ENCODE measurements at regions of chr22 and their contacts with region 1.

Region 1: DNA sequence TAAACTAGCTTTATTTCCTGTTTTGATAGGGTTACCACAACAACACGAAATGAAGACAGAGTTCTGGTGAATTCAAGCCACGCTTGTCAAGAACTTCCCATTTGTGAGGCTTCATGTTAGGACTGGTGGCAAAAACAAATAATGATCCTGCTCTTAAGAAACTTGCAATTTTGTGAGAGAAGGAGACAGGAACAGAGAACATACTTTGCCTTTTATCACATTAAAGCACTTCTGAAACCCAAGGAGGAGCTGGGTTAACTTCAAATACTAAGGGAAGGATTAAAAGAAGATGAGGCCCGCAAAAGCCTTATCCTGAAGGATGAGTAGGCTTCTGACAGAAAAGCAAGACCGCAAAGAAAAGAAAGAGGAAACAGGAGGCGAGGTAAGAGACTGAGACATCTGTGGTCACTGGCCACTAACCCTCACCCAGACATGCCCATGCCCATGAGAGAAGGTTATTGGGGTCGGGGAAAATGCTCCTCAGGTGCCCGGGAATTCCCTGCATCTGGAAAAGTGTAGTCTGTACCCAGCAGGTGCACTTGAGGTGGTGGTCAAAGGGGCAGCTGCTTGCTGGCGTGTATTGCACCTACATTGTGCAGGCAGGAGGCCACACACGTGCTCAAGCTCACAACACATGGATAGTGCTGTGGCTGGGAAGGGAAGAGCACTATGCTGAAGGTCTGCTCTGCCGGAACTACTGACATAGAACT is 50.5 kb downstream of the MAPK1 start:
- DNase-seq: peak; percentile 42
- H3K4me3 Mint-ChIP-seq: peak overlapping the region; percentile 65
- H3K27ac Mint-ChIP-seq: peak overlapping the region; percentile 96
- H3K4me1 Mint-ChIP-seq: peaks cover 47% of the 10 kb centered on the region
- H3K27me3 Mint-ChIP-seq: no peaks in the 10 kb centered on the region

Region 2: DNA sequence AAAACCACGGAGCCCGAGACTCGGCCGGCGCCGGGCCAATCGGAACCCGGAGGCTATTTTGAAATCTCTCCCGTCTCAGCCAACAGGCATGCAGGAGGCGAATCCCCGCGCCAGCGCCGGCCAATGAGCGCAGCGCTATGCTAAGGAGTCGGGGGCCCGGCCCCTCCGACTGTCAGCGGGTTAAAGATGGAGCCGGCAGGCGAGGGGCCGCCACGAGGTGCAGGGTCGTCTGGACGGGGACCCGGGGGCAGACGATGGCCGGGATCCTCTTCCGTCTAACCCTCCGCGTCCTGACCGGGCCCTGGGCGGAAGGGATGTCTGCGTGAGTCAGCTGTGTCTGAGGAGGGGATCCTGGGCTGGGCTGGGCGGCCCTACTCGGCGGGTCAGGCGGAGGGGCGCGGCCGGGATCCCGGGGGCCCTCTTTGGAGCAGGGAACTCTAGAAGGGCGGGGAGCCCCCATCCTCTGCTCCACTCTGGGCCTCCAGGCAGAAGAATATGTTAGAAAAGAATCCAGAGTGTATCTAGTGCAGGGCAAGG is 164.9 kb before region 1 on chr22:
- intact Hi-C with region 1: no loop called
- DNase-seq: peak; percentile 88
- H3K4me3 Mint-ChIP-seq: peak overlapping the region; percentile 88
- H3K27ac Mint-ChIP-seq: peak overlapping the region; percentile 80
- H3K4me1 Mint-ChIP-seq: peaks cover 34% of the 10 kb centered on the region
- H3K27me3 Mint-ChIP-seq: no peaks in the 10 kb centered on the region

Region 3: GRCh38 chr22:21791635-21792625 is 25.0 kb before region 1 on chr22:
- intact Hi-C with region 1: loop called (anchors 1 kb)
- DNase-seq: peak; percentile 12
- H3K4me3 Mint-ChIP-seq: no peak overlapping the region
- H3K27ac Mint-ChIP-seq: peak overlapping the region; percentile 72
- H3K4me1 Mint-ChIP-seq: peaks cover 12% of the 10 kb centered on the region
- H3K27me3 Mint-ChIP-seq: no peaks in the 10 kb centered on the region

Region 4: GRCh38 chr22:21876486-21877176 is 59.7 kb after region 1 on chr22:
- intact Hi-C with region 1: loop called (anchors 1 kb)
- DNase-seq: no peak
- H3K4me3 Mint-ChIP-seq: no peak overlapping the region
- H3K27ac Mint-ChIP-seq: peak overlapping the region; percentile 94
- H3K4me1 Mint-ChIP-seq: peaks cover 15% of the 10 kb centered on the region
- H3K27me3 Mint-ChIP-seq: peaks cover 18% of the 10 kb centered on the region

Measured in activated T-helper 1 cell treated with anti-CD3 and anti-CD28 coated beads, Interleukin-12 subunit alpha, Interleukin-12 subunit beta, Interleukin-2, Interleukin-4 antibody, amounts not matched to agents 30 ng/mL and 10 ng/mL and 1 ng/mL, durations not matched to agents 14 hours and 24 hours and 36 hours (primary cell).